PC-9 (cell line): ENCODE measurements at regions of chr3 and their contacts with region 1.

Region 1: DNA sequence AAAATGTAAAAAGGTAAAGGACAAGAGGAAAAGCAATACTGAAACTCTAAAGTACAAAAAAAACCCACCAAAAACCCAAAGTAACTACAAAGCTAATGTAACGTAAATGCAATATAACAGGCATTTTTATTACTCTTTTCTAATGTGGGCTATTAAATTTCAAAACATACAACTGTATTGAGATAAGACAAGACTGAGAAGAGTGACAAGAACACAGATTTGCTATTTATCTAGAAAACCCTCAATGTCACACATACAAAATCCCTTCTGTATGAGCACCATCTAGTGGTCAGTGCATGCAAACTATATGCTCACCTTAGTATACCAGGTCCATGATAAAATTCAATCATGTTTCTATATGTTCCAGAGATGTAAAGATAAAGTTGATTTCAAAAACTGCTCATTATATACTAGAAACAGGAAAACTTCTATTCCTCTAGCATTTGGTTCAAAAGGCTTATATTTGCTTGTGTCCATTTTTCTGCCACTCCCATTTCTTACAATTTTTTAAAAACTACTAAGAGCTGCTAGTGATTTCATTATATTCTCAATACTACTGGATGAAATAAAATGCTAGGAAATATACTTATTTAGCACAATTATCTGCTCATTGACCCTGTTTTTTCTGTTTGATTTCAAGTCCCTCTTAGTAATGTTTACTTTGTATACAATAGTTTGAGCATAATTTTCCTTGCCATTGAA is 111.4 kb downstream of the DLG1 start:
- DNase-seq: peak; percentile 8 to 69
- H3K4me3 ChIP-seq: no peak overlapping the region
- H3K27ac ChIP-seq: no peak overlapping the region
- H3K4me1 ChIP-seq: peaks cover 16% of the 10 kb centered on the region
- H3K27me3 ChIP-seq: no peaks in the 10 kb centered on the region
- CTCF ChIP-seq: peak; percentile 95

Region 2: GRCh38 chr3:196867507-196868296 is 319.3 kb before region 1 on chr3 and contains the start of gene SENP5:
- CTCF ChIA-PET with region 1: no interaction called
- POLR2A ChIA-PET with region 1: interaction called, 13 read pairs
- intact Hi-C with region 1: no loop called
- DNase-seq: peak; percentile 80 to 94
- H3K4me3 ChIP-seq: peak within 1 kb of the TSS; percentile 95
- H3K27ac ChIP-seq: peak within 1 kb of the TSS; percentile 40
- H3K4me1 ChIP-seq: peaks cover 15% of the 10 kb centered on the region
- H3K27me3 ChIP-seq: no peaks in the 10 kb centered on the region
- CTCF ChIP-seq: no peak
- total RNA-seq, gene SENP5: 52.3 and 60.9 TPM in 2 replicates

Region 3: DNA sequence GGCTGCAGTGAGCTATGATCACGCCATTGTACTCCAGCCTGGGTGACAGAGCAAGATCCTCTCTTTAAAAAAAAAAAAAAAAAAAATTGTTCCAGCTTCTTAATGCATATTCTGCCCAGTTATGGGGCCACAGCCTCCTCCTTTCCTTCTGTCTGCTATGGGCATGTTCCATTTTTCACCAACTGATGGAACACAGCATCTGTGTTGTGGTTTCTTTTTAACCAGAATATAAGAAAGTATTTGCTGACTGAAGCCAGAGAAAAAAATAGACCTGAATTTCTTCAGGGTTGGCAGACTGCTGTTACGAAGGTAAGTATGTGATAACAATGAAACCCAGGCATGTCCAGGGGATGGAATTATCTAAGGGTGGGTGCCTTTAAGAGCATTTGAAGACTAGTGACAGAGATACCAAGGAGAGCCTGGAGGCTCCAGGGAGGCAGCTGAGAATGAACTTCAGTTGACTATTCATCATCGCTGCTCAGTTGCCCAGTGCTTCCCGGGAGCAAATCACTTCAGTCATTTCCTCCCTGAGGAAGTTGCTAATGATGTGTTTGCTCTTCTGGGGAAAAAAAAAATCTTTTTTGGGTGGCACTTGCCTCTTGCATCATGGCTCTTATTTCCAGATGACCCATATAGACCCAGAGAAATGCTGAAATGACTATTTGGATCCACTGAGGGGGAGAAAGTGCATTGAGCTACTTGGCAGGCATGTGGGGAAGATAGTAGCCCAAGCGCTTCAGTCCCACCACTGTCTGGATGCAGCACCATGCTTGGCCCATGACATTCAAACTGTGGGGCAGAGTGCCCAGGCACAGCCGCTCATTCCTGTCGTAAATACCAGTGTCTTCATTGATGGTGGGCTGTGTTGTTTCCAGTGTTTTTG is 259.2 kb before region 1 on chr3:
- CTCF ChIA-PET with region 1: interaction called, 13 read pairs
- POLR2A ChIA-PET with region 1: no interaction called
- intact Hi-C with region 1: no loop called
- DNase-seq: no peak
- H3K4me3 ChIP-seq: no peak overlapping the region
- H3K27ac ChIP-seq: no peak overlapping the region
- H3K4me1 ChIP-seq: no peaks in the 10 kb centered on the region
- H3K27me3 ChIP-seq: no peaks in the 10 kb centered on the region
- CTCF ChIP-seq: no peak

Region 4: GRCh38 chr3:196979545-196979944 is 207.5 kb before region 1 on chr3:
- CTCF ChIA-PET with region 1: no interaction called
- POLR2A ChIA-PET with region 1: no interaction called
- intact Hi-C with region 1: loop called (anchors 2 kb)
- DNase-seq: no peak
- H3K4me3 ChIP-seq: no peak overlapping the region
- H3K27ac ChIP-seq: no peak overlapping the region
- H3K4me1 ChIP-seq: no peaks in the 10 kb centered on the region
- H3K27me3 ChIP-seq: no peaks in the 10 kb centered on the region
- CTCF ChIP-seq: no peak

Region 5: DNA sequence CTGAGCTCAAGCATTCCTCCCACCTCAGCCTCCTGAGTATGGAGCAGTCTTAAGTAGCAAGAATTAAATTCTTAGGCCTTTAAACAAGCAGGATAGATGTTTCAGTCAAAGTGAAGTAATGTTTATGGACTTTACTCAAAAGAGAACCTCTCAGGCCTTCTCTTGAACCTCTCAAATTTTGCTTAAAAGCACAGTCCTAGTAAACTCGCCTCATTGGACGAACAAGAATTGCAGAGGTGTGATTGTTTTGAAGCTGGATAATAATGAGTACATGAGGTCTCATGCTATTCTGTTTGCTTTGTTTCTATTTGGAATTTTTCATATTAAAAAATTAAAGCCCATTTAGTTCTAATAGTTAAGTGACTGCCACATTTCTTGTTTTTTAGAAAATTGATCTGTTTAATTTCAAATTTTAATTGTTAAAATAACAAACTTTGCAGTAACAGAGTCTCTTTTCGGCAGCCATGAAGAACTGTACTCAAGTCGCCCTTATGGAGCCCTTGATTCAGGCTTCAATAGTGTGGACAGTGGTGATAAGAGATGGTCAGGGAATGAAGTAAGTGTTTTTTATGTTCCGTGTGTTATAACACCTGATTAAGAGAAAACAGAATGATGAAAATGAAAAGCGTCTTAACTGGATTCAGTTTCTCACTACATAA is 643.4 kb after region 1 on chr3:
- CTCF ChIA-PET with region 1: no interaction called
- POLR2A ChIA-PET with region 1: interaction called, 10 read pairs
- intact Hi-C with region 1: no loop called
- DNase-seq: no peak
- H3K4me3 ChIP-seq: no peak overlapping the region
- H3K27ac ChIP-seq: no peak overlapping the region
- H3K4me1 ChIP-seq: no peaks in the 10 kb centered on the region
- H3K27me3 ChIP-seq: no peaks in the 10 kb centered on the region
- CTCF ChIP-seq: no peak